ENCODE measurements at regions of chr1 and their contacts with region 1.

Region 1: DNA sequence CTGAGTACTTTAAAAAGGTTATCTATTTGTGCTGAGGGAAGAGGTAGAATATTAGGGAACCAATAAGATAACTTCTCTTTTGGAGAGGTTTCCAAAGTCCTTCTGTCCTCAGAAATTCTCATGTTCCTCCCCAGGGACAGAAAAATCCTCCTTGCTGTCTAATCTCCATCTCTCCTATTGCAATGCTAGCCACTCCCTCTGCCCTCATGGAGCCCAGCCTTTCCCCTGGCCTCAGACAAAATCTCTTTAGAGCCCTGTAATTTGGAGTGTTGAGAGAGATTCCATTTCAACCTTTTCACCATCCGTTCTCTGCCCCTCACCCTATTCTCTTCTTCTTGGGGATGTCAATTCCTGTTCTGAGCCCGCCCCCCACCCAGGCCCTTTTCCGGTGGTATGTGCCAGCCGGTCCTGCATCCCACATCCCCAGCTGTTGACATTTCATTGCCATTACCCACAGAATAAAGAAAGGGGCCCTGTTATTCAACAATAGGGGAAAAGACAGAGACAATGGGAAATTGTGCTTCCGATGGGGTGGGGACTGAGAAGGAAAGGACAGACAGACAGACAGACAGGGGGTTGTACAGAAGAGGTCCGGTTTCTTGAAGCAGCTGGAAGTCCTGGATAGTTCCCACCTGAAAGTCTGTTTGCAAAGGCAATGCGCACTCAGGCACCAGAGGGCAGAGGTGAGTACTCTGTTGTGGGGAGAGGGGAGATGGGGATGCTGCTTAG is at the start of gene HAPLN2:
- DNase-seq: peak; percentile 79
- ATAC-seq: peak; percentile 86
- H3K4me3 Mint-ChIP-seq: no peak within 1 kb of the TSS
- H3K27ac Mint-ChIP-seq: no peak within 1 kb of the TSS
- H3K4me1 Mint-ChIP-seq: peaks cover 7% of the 10 kb centered on the region
- H3K27me3 Mint-ChIP-seq: peaks cover 58% of the 10 kb centered on the region
- CTCF ChIP-seq: no peak
- total RNA-seq, gene HAPLN2: 1.1 to 1.3 TPM (median 1.2 TPM) in 3 replicates

Region 2: GRCh38 chr1:156601122-156601830 is 17.7 kb before region 1 on chr1 and contains the start of gene GPATCH4:
- CTCF ChIA-PET with region 1: interaction called, 24 read pairs
- POLR2A ChIA-PET with region 1: no interaction called
- DNase-seq: peak; percentile 81
- ATAC-seq: peak; percentile 81
- H3K4me3 Mint-ChIP-seq: peak within 1 kb of the TSS; percentile 94
- H3K27ac Mint-ChIP-seq: peak within 1 kb of the TSS; percentile 98
- H3K4me1 Mint-ChIP-seq: peaks cover 13% of the 10 kb centered on the region
- H3K27me3 Mint-ChIP-seq: no peaks in the 10 kb centered on the region
- CTCF ChIP-seq: no peak
- total RNA-seq, gene GPATCH4: 37.1 to 50.1 TPM (median 38.2 TPM) in 3 replicates

Region 3: GRCh38 chr1:156608036-156608674 is 10.9 kb before region 1 on chr1:
- CTCF ChIA-PET with region 1: interaction called, 30 read pairs
- POLR2A ChIA-PET with region 1: interaction called, 5 read pairs
- DNase-seq: peak; percentile 53
- ATAC-seq: peak; percentile 97
- H3K4me3 Mint-ChIP-seq: no peak overlapping the region
- H3K27ac Mint-ChIP-seq: no peak overlapping the region
- H3K4me1 Mint-ChIP-seq: peaks cover 4% of the 10 kb centered on the region; the same call in 1 of the 2 replicates
- H3K27me3 Mint-ChIP-seq: peaks cover 5% of the 10 kb centered on the region; the same call in 1 of the 2 replicates
- CTCF ChIP-seq: no peak; the same call in 1 of the 2 replicates

Region 4: GRCh38 chr1:156641761-156642264 is 22.8 kb after region 1 on chr1 and contains the start of gene BCAN:
- CTCF ChIA-PET with region 1: interaction called, 180 read pairs
- POLR2A ChIA-PET with region 1: interaction called, 8 read pairs
- DNase-seq: peak; percentile 73
- ATAC-seq: peak; percentile 70
- H3K4me3 Mint-ChIP-seq: peak within 1 kb of the TSS; percentile 70
- H3K27ac Mint-ChIP-seq: no peak within 1 kb of the TSS
- H3K4me1 Mint-ChIP-seq: peaks cover 29% of the 10 kb centered on the region
- H3K27me3 Mint-ChIP-seq: peaks cover 92% of the 10 kb centered on the region
- CTCF ChIP-seq: no peak
- total RNA-seq, gene BCAN: 2.5 to 3.7 TPM (median 3.6 TPM) in 3 replicates

Region 5: DNA sequence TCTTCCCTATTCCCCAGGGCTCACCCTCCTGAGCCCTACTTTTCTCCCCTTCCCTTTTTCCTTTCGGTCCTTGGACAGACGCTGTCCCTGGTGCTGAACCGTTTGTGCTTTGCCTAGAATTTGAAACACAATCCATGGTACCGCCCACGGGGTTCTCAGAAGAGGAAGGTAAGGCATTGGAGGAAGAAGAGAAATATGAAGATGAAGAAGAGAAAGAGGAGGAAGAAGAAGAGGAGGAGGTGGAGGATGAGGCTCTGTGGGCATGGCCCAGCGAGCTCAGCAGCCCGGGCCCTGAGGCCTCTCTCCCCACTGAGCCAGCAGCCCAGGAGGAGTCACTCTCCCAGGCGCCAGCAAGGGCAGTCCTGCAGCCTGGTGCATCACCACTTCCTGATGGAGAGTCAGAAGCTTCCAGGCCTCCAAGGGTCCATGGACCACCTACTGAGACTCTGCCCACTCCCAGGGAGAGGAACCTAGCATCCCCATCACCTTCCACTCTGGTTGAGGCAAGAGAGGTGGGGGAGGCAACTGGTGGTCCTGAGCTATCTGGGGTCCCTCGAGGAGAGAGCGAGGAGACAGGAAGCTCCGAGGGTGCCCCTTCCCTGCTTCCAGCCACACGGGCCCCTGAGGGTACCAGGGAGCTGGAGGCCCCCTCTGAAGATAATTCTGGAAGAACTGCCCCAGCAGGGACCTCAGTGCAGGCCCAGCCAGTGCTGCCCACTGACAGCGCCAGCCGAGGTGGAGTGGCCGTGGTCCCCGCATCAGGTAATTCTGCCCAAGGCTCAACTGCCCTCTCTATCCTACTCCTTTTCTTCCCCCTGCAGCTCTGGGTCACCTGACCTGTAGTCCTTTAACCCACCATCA is 33.3 kb after region 1 on chr1:
- CTCF ChIA-PET with region 1: interaction called, 365 read pairs
- POLR2A ChIA-PET with region 1: interaction called, 7 read pairs
- DNase-seq: peak; percentile 84
- ATAC-seq: peak; percentile 58
- H3K4me3 Mint-ChIP-seq: no peak overlapping the region
- H3K27ac Mint-ChIP-seq: no peak overlapping the region
- H3K4me1 Mint-ChIP-seq: peaks cover 28% of the 10 kb centered on the region
- H3K27me3 Mint-ChIP-seq: peaks cover 95% of the 10 kb centered on the region
- CTCF ChIP-seq: no peak

Region 6: GRCh38 chr1:156677616-156678596 is 58.9 kb after region 1 on chr1:
- CTCF ChIA-PET with region 1: interaction called, 134 read pairs
- POLR2A ChIA-PET with region 1: interaction called, 16 read pairs
- DNase-seq: peak; percentile 77
- ATAC-seq: peak; percentile 2
- H3K4me3 Mint-ChIP-seq: peak overlapping the region; percentile 76
- H3K27ac Mint-ChIP-seq: peak overlapping the region; percentile 82
- H3K4me1 Mint-ChIP-seq: peaks cover 57% of the 10 kb centered on the region
- H3K27me3 Mint-ChIP-seq: peaks cover 34% of the 10 kb centered on the region
- CTCF ChIP-seq: peak; percentile 76

Region 7: DNA sequence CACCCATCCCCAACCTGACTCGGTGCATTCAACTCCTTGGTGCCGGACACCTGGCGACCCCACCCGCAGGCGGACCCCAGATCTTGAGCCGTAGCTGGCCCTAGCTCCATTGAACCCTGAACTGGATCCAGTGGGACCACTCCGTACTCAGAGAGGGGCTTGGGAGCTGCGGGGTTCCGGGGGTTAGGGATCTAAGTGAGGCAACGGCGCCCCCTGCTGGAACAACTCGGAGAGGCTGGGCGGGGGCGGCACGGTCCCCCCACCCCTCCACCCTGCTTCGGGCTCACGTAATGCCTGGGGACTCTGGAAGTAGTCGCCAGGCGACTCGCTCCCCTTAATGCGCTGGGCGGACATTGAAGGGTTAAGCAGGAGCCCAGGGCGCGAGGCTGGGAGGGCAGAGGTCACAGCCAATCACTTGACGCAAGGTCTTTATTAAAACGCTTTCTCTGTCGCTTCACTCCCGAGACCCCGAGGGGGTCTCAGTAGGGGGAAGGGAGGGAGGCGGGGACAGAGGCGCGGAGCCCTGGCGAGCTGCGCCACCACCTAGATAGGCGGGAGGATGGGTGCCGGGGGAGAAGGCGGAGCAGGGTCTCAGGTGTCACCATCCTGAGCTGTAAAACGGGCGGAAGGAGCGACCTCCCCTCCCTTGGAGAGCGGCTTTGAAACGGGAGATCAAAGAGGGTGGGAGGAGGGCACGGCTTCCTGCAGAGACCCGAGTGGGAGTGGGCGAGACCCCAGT is 87.1 kb after region 1 on chr1:
- CTCF ChIA-PET with region 1: interaction called, 20 read pairs
- POLR2A ChIA-PET with region 1: interaction called, 7 read pairs
- DNase-seq: peak; percentile 94
- ATAC-seq: peak; percentile 45
- H3K4me3 Mint-ChIP-seq: peak overlapping the region; percentile 84
- H3K27ac Mint-ChIP-seq: peak overlapping the region; percentile 96
- H3K4me1 Mint-ChIP-seq: peaks cover 62% of the 10 kb centered on the region
- H3K27me3 Mint-ChIP-seq: peaks cover 23% of the 10 kb centered on the region
- CTCF ChIP-seq: peak; percentile 96

Measured in WTC11 (cell line).